CD8-positive, alpha-beta T cell (primary cell): ENCODE measurements at regions of chr3 and their contacts with region 1.

Region 1: GRCh38 chr3:63595221-63595620 is 57.3 kb upstream of the SNTN start:
- DNase-seq: no peak
- ATAC-seq: no peak
- H3K4me3 ChIP-seq: no peak overlapping the region
- H3K4me3 Mint-ChIP-seq: no peak overlapping the region
- H3K27ac ChIP-seq: no peak overlapping the region
- H3K27ac Mint-ChIP-seq: no peak overlapping the region
- H3K4me1 ChIP-seq: no peaks in the 10 kb centered on the region
- H3K4me1 Mint-ChIP-seq: no peaks in the 10 kb centered on the region
- H3K27me3 ChIP-seq: no peaks in the 10 kb centered on the region
- H3K27me3 Mint-ChIP-seq: no peaks in the 10 kb centered on the region
- CTCF ChIP-seq: no peak

Region 2: DNA sequence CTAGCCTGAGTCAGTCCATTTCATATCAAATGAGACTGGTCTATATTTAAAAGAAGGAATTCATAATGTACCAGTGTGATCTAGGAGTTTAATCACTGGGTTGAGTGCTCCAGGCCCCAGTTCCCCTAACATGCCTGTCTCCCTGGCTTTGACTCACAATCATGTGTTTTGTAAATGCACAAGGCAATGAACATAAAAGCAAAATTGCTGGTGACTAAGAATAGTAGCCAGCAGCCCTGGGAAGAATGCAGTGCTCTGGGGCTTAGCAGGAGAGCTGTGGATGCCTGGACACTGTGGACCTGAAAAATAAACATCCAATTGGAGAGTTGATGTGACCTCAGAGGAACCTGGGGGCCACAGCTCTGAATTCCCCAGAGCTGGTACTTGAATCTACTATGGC is 266.9 kb before region 1 on chr3:
- CTCF ChIA-PET with region 1: no interaction called
- POLR2A ChIA-PET with region 1: no interaction called
- intact Hi-C with region 1: loop called in 1 of 2 experiments (anchors 5 kb)
- DNase-seq: no peak
- ATAC-seq: no peak
- H3K4me3 ChIP-seq: no peak overlapping the region
- H3K4me3 Mint-ChIP-seq: no peak overlapping the region
- H3K27ac ChIP-seq: no peak overlapping the region
- H3K27ac Mint-ChIP-seq: no peak overlapping the region
- H3K4me1 ChIP-seq: no peaks in the 10 kb centered on the region
- H3K4me1 Mint-ChIP-seq: no peaks in the 10 kb centered on the region
- H3K27me3 ChIP-seq: no peaks in the 10 kb centered on the region
- H3K27me3 Mint-ChIP-seq: no peaks in the 10 kb centered on the region
- CTCF ChIP-seq: no peak

Region 3: DNA sequence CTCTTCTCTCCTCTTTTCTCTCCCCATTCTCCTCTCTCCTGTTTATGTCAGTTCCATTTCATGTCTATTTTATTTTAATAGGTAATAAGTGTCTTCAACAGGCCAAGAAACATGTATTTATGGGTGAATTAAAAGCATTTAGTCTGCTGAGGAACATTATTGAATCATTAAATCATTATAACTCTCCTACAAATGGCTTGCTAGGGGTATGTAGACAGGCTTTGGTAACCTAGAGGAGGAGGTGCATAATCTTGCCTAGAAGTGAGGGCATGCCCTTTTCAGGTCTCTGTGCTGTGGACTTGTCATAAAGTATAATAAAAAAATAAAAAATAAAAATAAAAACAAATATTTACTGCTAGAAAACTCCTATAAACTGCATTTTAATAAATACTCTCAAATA is 31.6 kb before region 1 on chr3:
- CTCF ChIA-PET with region 1: no interaction called
- POLR2A ChIA-PET with region 1: no interaction called
- intact Hi-C with region 1: no loop called
- DNase-seq: no peak
- ATAC-seq: no peak
- H3K4me3 ChIP-seq: no peak overlapping the region
- H3K4me3 Mint-ChIP-seq: no peak overlapping the region
- H3K27ac ChIP-seq: no peak overlapping the region
- H3K27ac Mint-ChIP-seq: no peak overlapping the region
- H3K4me1 ChIP-seq: no peaks in the 10 kb centered on the region
- H3K4me1 Mint-ChIP-seq: no peaks in the 10 kb centered on the region
- H3K27me3 ChIP-seq: no peaks in the 10 kb centered on the region
- H3K27me3 Mint-ChIP-seq: peaks cover 2% of the 10 kb centered on the region
- CTCF ChIP-seq: no peak

Region 4: GRCh38 chr3:64176461-64176996 is 581.3 kb after region 1 on chr3:
- CTCF ChIA-PET with region 1: no interaction called
- POLR2A ChIA-PET with region 1: no interaction called
- intact Hi-C with region 1: no loop called
- DNase-seq: no peak
- ATAC-seq: no peak
- H3K4me3 ChIP-seq: no peak overlapping the region
- H3K4me3 Mint-ChIP-seq: no peak overlapping the region
- H3K27ac ChIP-seq: no peak overlapping the region
- H3K27ac Mint-ChIP-seq: no peak overlapping the region
- H3K4me1 ChIP-seq: no peaks in the 10 kb centered on the region
- H3K4me1 Mint-ChIP-seq: no peaks in the 10 kb centered on the region
- H3K27me3 ChIP-seq: no peaks in the 10 kb centered on the region
- H3K27me3 Mint-ChIP-seq: peaks cover 16% of the 10 kb centered on the region
- CTCF ChIP-seq: no peak

Region 5: DNA sequence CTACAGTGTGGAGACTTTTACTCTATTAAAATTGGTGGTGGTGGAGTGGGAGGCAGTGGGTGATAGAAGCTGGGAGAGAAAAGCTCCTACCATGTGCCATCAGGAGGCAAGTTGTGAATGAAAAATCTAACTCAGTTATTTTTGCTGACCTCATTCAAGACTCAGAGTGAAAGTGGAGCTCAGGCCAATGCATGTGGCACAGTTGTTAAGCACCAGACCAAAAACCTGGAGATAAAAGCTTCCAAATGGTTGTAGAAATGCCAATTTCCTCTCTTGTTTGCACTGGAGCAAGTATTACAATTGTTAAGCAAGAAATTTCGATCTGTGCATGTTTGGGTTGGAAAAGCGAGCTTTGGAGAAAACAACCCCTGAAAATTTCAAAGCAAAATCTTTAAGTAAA is 711.5 kb after region 1 on chr3:
- CTCF ChIA-PET with region 1: no interaction called
- POLR2A ChIA-PET with region 1: no interaction called
- intact Hi-C with region 1: loop called in 1 of 2 experiments (anchors 5 kb)
- DNase-seq: no peak
- ATAC-seq: no peak
- H3K4me3 ChIP-seq: no peak overlapping the region
- H3K4me3 Mint-ChIP-seq: no peak overlapping the region
- H3K27ac ChIP-seq: no peak overlapping the region
- H3K27ac Mint-ChIP-seq: no peak overlapping the region
- H3K4me1 ChIP-seq: no peaks in the 10 kb centered on the region
- H3K4me1 Mint-ChIP-seq: no peaks in the 10 kb centered on the region
- H3K27me3 ChIP-seq: no peaks in the 10 kb centered on the region
- H3K27me3 Mint-ChIP-seq: no peaks in the 10 kb centered on the region
- CTCF ChIP-seq: no peak